Cardiac septum (tissue), 1 donor: ENCODE measurements at regions of chr1 and their contacts with region 1.

Region 1: DNA sequence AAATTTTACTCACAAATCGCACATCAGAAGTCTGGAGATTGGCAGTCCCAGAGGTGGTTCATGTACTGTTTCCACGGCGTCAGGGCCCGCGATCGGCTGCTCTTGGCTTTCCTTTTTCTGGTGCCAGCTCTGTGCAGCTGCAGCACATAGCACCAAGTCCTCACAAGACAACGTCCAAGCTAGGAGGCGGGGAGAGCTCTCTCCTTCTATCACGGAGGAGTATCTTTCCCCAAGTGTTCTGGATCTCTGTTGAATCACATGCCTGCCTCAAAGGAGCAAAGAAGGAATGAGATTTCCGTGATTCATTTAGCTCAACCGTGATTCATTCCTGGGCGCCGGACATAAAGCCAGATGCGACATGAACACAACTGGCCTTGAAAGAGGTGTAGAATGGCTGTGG is 25.5 kb downstream of the MT1HL1 start:
- DNase-seq: no peak

Region 2: GRCh38 chr1:236925386-236925785 is 53.4 kb before region 1 on chr1:
- intact Hi-C with region 1: loop called (anchors 5 kb)
- DNase-seq: no peak

Region 3: GRCh38 chr1:236997882-236998281 is 19.1 kb after region 1 on chr1:
- intact Hi-C with region 1: no loop called
- DNase-seq: peak; percentile 84